ENCODE measurements at regions of chr7 and their contacts with region 1.

Region 1: GRCh38 chr7:141654551-141654950 is 47.4 kb downstream of the DENND11 start:
- DNase-seq: peak; percentile 62
- CTCF ChIP-seq: peak; percentile 80

Region 2: DNA sequence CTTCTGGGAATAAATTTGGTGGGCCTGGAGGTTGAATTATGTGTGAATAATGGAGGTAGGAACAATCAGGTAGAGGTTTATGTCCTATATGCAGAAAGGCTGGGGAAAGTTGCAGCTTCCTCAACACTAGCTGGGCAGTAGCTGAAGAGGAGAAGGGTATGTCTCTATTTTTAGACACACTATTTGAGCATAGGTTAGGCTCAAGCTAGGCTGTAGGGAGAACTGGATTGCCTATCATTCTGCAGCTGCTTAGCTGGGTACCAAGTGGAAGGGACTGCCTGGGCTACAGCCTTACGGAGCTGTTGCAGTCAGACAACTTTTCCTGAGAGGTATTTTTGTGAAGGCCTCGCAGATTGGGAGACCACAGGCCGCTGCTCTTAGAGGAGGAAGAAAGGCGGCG is 20.5 kb before region 1 on chr7:
- CTCF ChIA-PET with region 1: interaction called, 18 read pairs
- POLR2A ChIA-PET with region 1: no interaction called
- DNase-seq: no peak
- CTCF ChIP-seq: no peak

Region 3: GRCh38 chr7:141668853-141669252 is 14.3 kb after region 1 on chr7:
- CTCF ChIA-PET with region 1: interaction called, 23 read pairs
- POLR2A ChIA-PET with region 1: no interaction called
- DNase-seq: no peak
- CTCF ChIP-seq: no peak

Region 4: GRCh38 chr7:141710301-141710700 is 55.8 kb after region 1 on chr7:
- CTCF ChIA-PET with region 1: interaction called, 24 read pairs
- POLR2A ChIA-PET with region 1: no interaction called
- DNase-seq: no peak
- CTCF ChIP-seq: peak; percentile 28

Region 5: GRCh38 chr7:141785706-141786552 is 131.4 kb after region 1 on chr7:
- CTCF ChIA-PET with region 1: interaction called, 68 read pairs
- POLR2A ChIA-PET with region 1: no interaction called
- DNase-seq: peak; percentile 62
- CTCF ChIP-seq: peak; percentile 85

Measured in GM10248 (cell line).